Activated naive CD4-positive, alpha-beta T cell treated with anti-CD3 and anti-CD28 coated beads for 36 hours (primary cell): ENCODE measurements at regions of chr1 and their contacts with region 1.

Region 1: DNA sequence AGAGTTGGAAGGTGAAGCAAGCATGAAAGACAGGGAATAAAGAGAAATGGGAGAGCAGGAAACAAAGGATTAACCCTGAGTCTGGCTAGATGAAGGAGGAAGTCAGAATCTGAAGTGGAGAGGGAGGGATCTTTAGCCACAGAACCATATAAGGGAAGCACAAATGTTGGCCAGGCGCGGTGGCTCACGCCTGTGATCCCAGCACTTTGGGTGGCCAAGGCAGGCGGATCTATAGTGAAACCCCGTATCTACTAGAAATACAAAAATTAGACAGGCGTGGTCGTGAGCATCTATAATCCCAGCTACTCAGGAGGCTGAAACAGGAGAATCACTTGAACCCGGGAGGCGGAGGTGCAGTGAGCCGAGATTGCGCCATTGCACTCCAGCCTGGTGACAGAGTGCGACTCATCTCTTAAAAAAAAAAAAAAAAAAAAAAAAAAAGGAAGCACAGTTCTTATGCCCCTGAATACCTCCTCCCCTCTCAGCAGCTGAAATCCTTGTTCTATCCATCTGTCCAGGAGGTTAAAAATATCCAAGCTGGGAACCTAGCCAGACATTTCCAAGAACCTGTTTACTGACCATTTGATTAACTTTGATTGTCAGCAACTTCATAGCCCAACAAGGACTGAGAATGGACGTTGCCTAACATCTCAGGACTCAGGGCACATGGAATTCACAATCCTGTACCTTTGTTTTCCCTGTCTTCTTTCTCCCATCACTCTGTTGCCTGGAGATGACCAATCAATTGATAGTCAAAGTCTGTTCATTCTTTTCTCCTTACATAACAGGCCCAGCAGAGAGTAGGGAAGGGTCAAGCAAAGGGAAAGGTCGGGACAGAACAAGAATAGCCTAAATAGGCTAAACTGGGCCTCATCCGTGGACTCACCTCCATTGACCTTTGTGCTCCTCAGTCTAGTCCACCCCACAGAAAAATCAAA is 10.6 kb downstream of the TXNIP start:
- DNase-seq: peak; percentile 41
- H3K4me3 Mint-ChIP-seq: peak overlapping the region; percentile 32
- H3K27ac Mint-ChIP-seq: peak overlapping the region; percentile 91
- H3K4me1 Mint-ChIP-seq: peaks cover 43% of the 10 kb centered on the region
- H3K27me3 Mint-ChIP-seq: no peaks in the 10 kb centered on the region

Region 2: GRCh38 chr1:146007506-146008133 is 21.8 kb after region 1 on chr1:
- CTCF ChIA-PET with region 1: interaction called, 230 read pairs
- intact Hi-C with region 1: no loop called
- DNase-seq: no peak
- H3K4me3 Mint-ChIP-seq: no peak overlapping the region
- H3K27ac Mint-ChIP-seq: peak overlapping the region; percentile 93
- H3K4me1 Mint-ChIP-seq: peaks cover 38% of the 10 kb centered on the region
- H3K27me3 Mint-ChIP-seq: no peaks in the 10 kb centered on the region